ENCODE measurements at regions of chr17 and their contacts with region 1.

Region 1: DNA sequence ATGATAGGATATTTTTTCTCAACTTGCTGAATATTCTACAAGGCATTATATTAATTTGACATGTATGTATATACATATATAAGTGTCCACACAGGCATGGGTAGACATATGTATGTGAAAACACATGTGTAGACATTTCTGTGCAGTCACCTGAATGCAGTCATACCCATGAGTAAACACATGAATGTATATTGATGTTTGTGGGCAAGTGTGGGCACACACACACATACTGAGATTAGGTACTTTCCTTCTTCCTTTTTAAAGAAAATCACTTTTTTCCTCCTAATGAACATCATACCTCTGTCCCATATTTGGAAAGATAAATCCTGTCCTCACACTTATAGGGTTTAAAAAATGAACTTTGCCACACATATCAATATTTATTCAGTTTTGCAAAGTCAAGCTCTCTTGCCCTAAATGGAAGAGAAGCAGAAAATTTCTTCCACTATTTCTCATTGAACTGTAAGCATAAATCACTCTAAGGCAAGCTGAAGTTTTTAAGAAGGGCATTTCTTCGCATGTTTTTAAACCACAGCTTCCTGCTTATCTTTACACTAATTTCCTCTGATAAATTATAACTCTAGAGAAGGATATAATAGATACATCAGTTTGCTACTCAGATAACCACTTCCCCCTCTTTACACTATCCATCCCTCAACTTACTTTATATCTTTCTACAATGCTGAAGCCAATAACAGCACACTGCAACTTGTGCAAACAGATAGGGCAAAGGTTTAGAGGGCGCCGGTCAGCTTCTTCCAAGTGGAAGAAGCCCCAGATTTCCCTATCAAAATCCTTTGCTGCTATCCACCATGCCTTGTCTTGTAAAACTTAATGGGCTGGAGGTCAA is 49.6 kb upstream of the LRRC37A3 start:
- DNase-seq: peak; percentile 29 to 79 (median 69)
- H3K4me3 ChIP-seq: peak overlapping the region in 1 of 7 experiments; percentile 10
- H3K27ac ChIP-seq: no peak overlapping the region
- H3K4me1 ChIP-seq: peaks cover 33 to 62% (median 51%) of the 10 kb centered on the region in 4 experiments
- H3K27me3 ChIP-seq: no peaks in the 10 kb centered on the region

Region 2: GRCh38 chr17:65100316-65101140 is 131.7 kb after region 1 on chr17:
- CTCF ChIA-PET with region 1: interaction called, 11 read pairs
- POLR2A ChIA-PET with region 1: interaction called, 3 read pairs
- DNase-seq: peak; percentile 76 to 92 (median 90)
- H3K4me3 ChIP-seq: peak overlapping the region in 6 of 7 experiments; percentile 13 to 75 (median 50)
- H3K27ac ChIP-seq: no peak overlapping the region
- H3K4me1 ChIP-seq: peaks cover 0 to 11% (median 10%) of the 10 kb centered on the region in 4 experiments
- H3K27me3 ChIP-seq: no peaks in the 10 kb centered on the region